ENCODE measurements at regions of chr1 and their contacts with region 1.

Region 1: DNA sequence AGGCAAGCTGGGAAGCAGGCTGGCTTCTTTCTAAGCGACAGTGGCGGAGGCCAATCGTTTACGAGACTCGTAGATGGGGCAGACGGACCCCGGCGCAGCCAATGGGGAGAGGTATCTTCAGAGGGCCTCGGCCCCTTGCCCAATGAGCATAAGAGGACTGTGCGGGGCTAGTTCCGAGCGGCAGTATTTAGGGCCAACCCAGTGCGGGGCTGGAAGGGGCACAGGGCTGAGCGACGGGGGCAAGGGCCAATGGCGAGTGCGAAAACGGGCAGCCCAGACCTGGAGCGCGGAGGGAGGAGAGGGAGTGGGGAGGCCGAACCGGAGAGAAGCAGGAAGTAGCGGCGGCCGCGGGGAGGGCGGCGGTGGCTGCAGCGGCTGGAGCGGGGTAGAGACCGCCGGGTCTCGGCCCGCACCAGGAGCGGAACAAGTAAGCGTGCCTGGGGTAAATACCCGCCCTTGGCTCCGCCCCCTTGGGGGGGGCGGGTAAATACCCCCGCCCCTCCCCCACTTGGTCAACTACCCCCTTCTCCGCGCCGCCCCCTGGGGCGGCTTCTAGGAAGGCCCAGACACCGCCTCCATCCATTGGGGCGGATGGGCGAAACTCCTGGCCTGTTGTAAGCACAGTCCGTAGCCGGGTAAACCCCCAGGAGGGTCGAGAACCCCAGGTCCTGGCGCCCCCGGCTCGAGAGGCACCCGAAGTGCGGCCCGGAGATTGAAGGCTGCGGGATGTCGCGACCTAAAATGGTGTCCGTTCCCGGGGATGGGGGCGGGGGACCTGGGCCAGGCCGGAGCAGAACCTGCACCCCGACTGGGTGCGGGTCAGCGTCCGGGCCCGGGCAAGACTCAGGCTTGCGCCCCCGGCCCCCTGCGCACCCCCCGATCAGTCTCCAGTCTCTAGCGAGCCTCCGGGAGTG is at the start of gene ZNF687:
- DNase-seq: peak; percentile 93 to 99 (median 99)
- ATAC-seq: peak; percentile 91
- H3K4me3 ChIP-seq: peak within 1 kb of the TSS; percentile 96
- H3K4me3 Mint-ChIP-seq: peak within 1 kb of the TSS; percentile 93 to 100 (median 97)
- H3K27ac ChIP-seq: peak within 1 kb of the TSS; percentile 87
- H3K27ac Mint-ChIP-seq: peak within 1 kb of the TSS; percentile 92 to 100 (median 96)
- H3K4me1 ChIP-seq: peaks cover 10 to 11% of the 10 kb centered on the region in 2 donors
- H3K4me1 Mint-ChIP-seq: peaks cover 20 to 42% (median 27%) of the 10 kb centered on the region in 7 donors
- H3K27me3 ChIP-seq: no peaks in the 10 kb centered on the region
- H3K27me3 Mint-ChIP-seq: no peaks in the 10 kb centered on the region
- total RNA-seq, gene ZNF687: 30.4 to 38.1 (median 32.3) TPM

Region 2: GRCh38 chr1:151070474-151071276 is 211.6 kb before region 1 on chr1 and contains the start of gene GABPB2:
- CTCF ChIA-PET with region 1: no interaction called
- POLR2A ChIA-PET with region 1: no interaction called
- intact Hi-C with region 1: loop called in 1 of 2 experiments (anchors 1 kb)
- DNase-seq: peak; percentile 78 to 94 (median 89)
- ATAC-seq: peak; percentile 91
- H3K4me3 ChIP-seq: peak within 1 kb of the TSS; percentile 99
- H3K4me3 Mint-ChIP-seq: peak within 1 kb of the TSS; percentile 94 to 100 (median 99)
- H3K27ac ChIP-seq: peak within 1 kb of the TSS; percentile 94
- H3K27ac Mint-ChIP-seq: peak within 1 kb of the TSS; percentile 97 to 100 (median 100)
- H3K4me1 ChIP-seq: peaks cover 8 to 9% of the 10 kb centered on the region in 2 donors
- H3K4me1 Mint-ChIP-seq: peaks cover 5 to 37% (median 29%) of the 10 kb centered on the region in 7 donors
- H3K27me3 ChIP-seq: no peaks in the 10 kb centered on the region
- H3K27me3 Mint-ChIP-seq: peaks cover 0 to 2% (median 0%) of the 10 kb centered on the region in 5 donors
- total RNA-seq, gene GABPB2: 13.7 to 42.2 (median 32.2) TPM

Region 3: DNA sequence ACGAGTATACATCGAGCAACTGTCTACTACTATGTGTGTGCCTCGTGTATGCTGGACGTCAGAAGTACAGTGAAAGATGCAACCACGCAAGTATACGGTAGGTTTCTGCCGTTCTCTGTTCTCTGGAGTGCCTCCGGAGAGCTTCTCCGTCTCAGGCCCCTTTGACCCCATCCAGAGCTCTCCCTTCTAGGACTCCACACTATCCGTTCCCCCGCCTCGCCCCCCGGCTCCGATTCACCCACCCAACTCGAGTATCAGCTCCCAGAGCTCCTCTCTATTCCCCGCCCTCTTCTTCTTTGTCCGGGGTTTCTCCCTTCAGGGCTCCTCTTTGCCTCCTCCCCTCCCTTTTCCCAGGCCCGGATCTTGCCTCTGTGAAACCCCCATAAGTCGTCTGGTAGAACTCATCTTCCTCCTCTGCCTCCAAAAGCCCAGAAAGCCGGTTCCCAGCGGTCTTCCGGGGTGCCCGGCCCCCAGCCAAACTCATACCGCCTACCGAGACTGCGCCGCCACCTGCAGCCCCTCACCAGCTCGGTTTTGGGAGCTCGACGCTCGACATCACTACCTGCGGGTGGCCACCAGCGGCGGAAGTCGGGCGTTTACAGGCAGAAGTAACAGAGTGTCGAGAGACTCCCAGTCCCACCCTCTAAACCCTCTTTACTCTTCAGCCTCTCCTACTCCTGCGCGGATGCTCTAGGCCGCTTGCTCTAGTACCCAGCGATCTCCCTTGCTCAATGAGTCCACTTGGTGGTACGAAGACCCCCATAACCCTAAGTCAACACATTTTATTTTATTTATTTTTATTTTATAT is 92.4 kb before region 1 on chr1 and contains the start of gene VPS72:
- CTCF ChIA-PET with region 1: interaction called, 3 read pairs
- POLR2A ChIA-PET with region 1: interaction called, 3 read pairs
- intact Hi-C with region 1: loop called in 1 of 2 experiments (anchors 1 kb)
- DNase-seq: peak; percentile 57 to 90 (median 85)
- ATAC-seq: peak; percentile 98
- H3K4me3 ChIP-seq: peak within 1 kb of the TSS; percentile 80
- H3K4me3 Mint-ChIP-seq: peak within 1 kb of the TSS; percentile 91 to 99 (median 98)
- H3K27ac ChIP-seq: peak within 1 kb of the TSS; percentile 78
- H3K27ac Mint-ChIP-seq: peak within 1 kb of the TSS; percentile 91 to 98 (median 97)
- H3K4me1 ChIP-seq: peaks cover 16% of the 10 kb centered on the region in 2 donors
- H3K4me1 Mint-ChIP-seq: peaks cover 23 to 47% (median 35%) of the 10 kb centered on the region in 7 donors
- H3K27me3 ChIP-seq: no peaks in the 10 kb centered on the region
- H3K27me3 Mint-ChIP-seq: peaks cover 0 to 8% (median 0%) of the 10 kb centered on the region in 5 donors
- total RNA-seq, gene VPS72: 35.1 to 82.0 (median 63.9) TPM

Region 4: GRCh38 chr1:151327223-151327902 is 45.1 kb after region 1 on chr1 and contains the start of gene PI4KB:
- CTCF ChIA-PET with region 1: no interaction called
- POLR2A ChIA-PET with region 1: interaction called, 17 read pairs
- intact Hi-C with region 1: loop called (anchors 1 kb)
- DNase-seq: peak; percentile 72 to 96 (median 93)
- ATAC-seq: peak; percentile 96
- H3K4me3 ChIP-seq: peak within 1 kb of the TSS; percentile 72
- H3K4me3 Mint-ChIP-seq: peak within 1 kb of the TSS; percentile 91 to 100 (median 96)
- H3K27ac ChIP-seq: peak within 1 kb of the TSS; percentile 96
- H3K27ac Mint-ChIP-seq: peak within 1 kb of the TSS; percentile 90 to 100 (median 97)
- H3K4me1 ChIP-seq: peaks cover 6 to 18% of the 10 kb centered on the region in 2 donors
- H3K4me1 Mint-ChIP-seq: peaks cover 14 to 53% (median 44%) of the 10 kb centered on the region in 7 donors
- H3K27me3 ChIP-seq: no peaks in the 10 kb centered on the region
- H3K27me3 Mint-ChIP-seq: peaks cover 0 to 2% (median 0%) of the 10 kb centered on the region in 5 donors
- total RNA-seq, gene PI4KB: 64.0 to 91.9 (median 76.3) TPM

Region 5: GRCh38 chr1:151346769-151347522 is 64.7 kb after region 1 on chr1 and contains the start of gene RFX5:
- CTCF ChIA-PET with region 1: interaction called, 4 read pairs
- POLR2A ChIA-PET with region 1: interaction called, 5 read pairs
- intact Hi-C with region 1: loop called (anchors 1 kb)
- DNase-seq: peak; percentile 73 to 98 (median 94)
- ATAC-seq: peak; percentile 95
- H3K4me3 ChIP-seq: peak within 1 kb of the TSS; percentile 75
- H3K4me3 Mint-ChIP-seq: peak within 1 kb of the TSS; percentile 85 to 98 (median 95)
- H3K27ac ChIP-seq: peak within 1 kb of the TSS; percentile 96
- H3K27ac Mint-ChIP-seq: peak within 1 kb of the TSS; percentile 95 to 100 (median 99)
- H3K4me1 ChIP-seq: peaks cover 13 to 16% of the 10 kb centered on the region in 2 donors
- H3K4me1 Mint-ChIP-seq: peaks cover 20 to 44% (median 39%) of the 10 kb centered on the region in 7 donors
- H3K27me3 ChIP-seq: no peaks in the 10 kb centered on the region
- H3K27me3 Mint-ChIP-seq: no peaks in the 10 kb centered on the region
- total RNA-seq, gene RFX5: 62.6 to 89.3 (median 82.2) TPM

Region 6: GRCh38 chr1:151459331-151460046 is 177.3 kb after region 1 on chr1 and contains the start of gene POGZ:
- CTCF ChIA-PET with region 1: no interaction called
- POLR2A ChIA-PET with region 1: interaction called, 4 read pairs
- intact Hi-C with region 1: loop called (anchors 2 kb)
- DNase-seq: peak; percentile 80 to 94 (median 93)
- ATAC-seq: peak; percentile 87
- H3K4me3 ChIP-seq: peak within 1 kb of the TSS; percentile 73
- H3K4me3 Mint-ChIP-seq: peak within 1 kb of the TSS; percentile 87 to 100 (median 91)
- H3K27ac ChIP-seq: peak within 1 kb of the TSS; percentile 81
- H3K27ac Mint-ChIP-seq: peak within 1 kb of the TSS; percentile 91 to 97 (median 96)
- H3K4me1 ChIP-seq: peaks cover 8 to 12% of the 10 kb centered on the region in 2 donors
- H3K4me1 Mint-ChIP-seq: peaks cover 15 to 43% (median 34%) of the 10 kb centered on the region in 7 donors
- H3K27me3 ChIP-seq: no peaks in the 10 kb centered on the region
- H3K27me3 Mint-ChIP-seq: peaks cover 15 to 25% (median 18%) of the 10 kb centered on the region in 5 donors
- total RNA-seq, gene POGZ: 83.7 to 143 (median 112) TPM

Region 7: DNA sequence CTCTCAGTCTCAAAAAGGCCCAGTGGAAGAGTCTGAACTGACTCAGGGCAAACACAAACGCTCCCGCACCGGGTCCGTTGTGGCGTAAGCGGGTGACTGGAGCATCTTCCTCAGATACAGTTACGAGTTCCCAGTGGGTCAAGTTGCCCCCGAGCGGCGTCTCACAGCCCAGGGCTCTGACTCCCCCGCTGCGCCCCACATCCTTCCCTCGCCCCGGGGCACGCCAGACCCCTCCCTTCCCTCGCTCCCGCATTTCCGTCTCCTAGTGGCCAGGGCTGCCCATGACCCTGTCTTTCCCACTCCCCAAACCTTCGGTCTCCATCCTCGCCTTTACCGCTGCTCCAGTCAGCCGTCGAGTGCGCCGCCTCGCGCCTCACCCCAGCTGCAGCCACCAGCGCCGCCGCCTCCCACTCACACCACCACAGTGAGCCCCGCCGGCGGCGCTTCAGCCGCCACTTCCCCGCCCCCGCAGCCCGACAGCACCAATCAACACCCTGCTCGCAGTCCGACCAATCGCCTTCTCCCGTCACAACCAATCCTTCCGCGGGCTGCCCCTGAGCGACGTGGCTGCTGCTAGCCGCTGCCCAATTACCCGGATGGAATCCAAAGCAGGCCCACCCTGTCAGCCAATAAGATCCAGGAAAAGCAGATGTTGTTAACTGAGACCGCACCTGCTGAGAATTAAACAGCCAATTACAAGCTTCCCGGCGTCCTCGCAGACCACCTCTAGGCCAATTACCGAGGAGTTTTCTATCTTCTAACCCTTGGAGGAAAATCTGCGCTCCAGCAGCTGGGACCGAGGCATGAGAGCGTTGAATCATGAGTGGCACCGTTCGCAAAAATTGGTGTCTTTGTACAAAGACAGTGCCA is 508.1 kb after region 1 on chr1 and contains the start of gene TDRKH:
- CTCF ChIA-PET with region 1: no interaction called
- POLR2A ChIA-PET with region 1: no interaction called
- intact Hi-C with region 1: loop called in 1 of 2 experiments (anchors 2 kb)
- DNase-seq: peak; percentile 93 to 99 (median 99)
- ATAC-seq: peak; percentile 97
- H3K4me3 ChIP-seq: peak within 1 kb of the TSS; percentile 88
- H3K4me3 Mint-ChIP-seq: peak within 1 kb of the TSS; percentile 91 to 99 (median 97)
- H3K27ac ChIP-seq: peak within 1 kb of the TSS; percentile 60
- H3K27ac Mint-ChIP-seq: peak within 1 kb of the TSS; percentile 75 to 93 (median 89)
- H3K4me1 ChIP-seq: peaks cover 0 to 14% of the 10 kb centered on the region in 2 donors
- H3K4me1 Mint-ChIP-seq: peaks cover 6 to 38% (median 30%) of the 10 kb centered on the region in 7 donors
- H3K27me3 ChIP-seq: no peaks in the 10 kb centered on the region
- H3K27me3 Mint-ChIP-seq: peaks cover 0 to 2% (median 0%) of the 10 kb centered on the region in 5 donors
- total RNA-seq, gene TDRKH: 7.7 to 23.1 (median 17.0) TPM